ENCODE measurements at regions of chr3 and their contacts with region 1.

Region 1: GRCh38 chr3:159586571-159587202 is 401.9 kb upstream of the IL12A start:
- DNase-seq: peak; percentile 29
- H3K4me3 ChIP-seq: no peak overlapping the region
- CTCF ChIP-seq: peak; percentile 81

Region 2: DNA sequence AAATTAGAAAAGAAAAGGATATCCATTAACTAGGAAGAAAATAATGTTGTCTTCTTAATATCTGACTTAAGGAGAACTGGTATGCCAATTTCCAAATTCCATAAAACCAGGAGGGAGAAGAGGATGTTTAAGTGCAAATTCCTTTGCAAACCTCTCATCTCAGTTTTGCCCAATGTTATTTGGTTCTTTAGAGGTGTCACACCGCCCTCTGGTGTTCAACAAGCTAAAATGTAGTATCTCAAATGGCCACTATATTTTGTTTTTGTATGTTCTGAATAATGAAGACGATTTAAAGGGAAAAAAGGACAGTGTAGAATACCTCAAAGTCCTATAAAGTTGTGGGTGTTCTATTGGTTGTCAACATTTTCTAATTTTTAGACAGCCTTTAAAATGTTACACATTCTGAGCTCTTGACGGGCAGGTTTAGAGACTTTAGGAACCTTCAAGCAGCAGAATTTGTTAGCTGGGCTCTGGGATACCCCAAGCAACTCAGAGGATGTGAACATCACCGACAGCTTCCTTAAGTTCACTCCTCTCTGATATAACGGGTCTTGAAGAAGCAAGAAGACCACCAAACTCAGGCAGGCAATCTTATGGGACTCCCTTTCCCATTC is 326.5 kb before region 1 on chr3:
- in situ Hi-C with region 1: loop called (anchors 25 kb)
- DNase-seq: peak; percentile 74
- H3K4me3 ChIP-seq: no peak overlapping the region
- CTCF ChIP-seq: peak; percentile 66

Region 3: GRCh38 chr3:159548675-159549335 is 37.9 kb before region 1 on chr3:
- in situ Hi-C with region 1: no loop called
- DNase-seq: no peak
- H3K4me3 ChIP-seq: no peak overlapping the region
- CTCF ChIP-seq: no peak

Measured in astrocyte of the cerebellum (primary cell).